Psoas muscle (tissue), 8 donors: ENCODE measurements at regions of chr11 and their contacts with region 1.

Region 1: DNA sequence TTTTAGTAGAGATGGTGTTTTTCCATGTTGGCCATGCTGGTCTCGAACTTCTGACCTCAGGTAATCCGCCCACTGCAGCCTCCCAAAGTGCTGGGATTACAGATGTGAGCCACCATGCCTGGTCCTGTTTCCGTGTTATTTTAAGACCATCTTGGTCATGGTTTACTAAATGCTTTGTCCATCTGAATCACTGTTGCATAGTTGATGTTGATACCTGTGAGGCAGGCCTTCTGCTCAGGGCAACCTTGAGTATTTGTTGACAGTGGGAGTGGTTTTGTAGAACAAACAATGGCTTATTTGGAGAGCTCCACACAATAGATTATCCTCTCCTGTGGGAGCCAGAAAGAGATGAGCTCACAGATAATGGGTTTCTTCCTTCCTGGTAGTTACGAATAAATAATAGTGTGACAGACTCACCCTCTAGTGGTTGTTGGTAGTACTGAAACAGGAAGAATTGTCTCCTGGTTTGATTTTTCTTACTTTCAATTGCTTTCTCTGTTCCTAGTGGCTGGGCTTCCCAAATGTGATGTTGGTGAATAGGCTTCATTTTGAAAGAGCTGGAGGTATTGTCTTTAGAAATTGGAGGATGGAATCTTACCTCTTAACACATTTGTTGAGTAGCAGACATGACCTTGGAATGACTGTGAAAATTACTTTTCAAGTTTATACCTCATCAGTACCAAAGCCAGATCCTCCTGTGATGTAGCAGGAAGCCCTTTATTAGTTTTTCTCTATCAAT is 39.0 kb downstream of the CTNND1 start:
- DNase-seq: no peak
- ATAC-seq: peak; percentile 80 to 89 (median 82)
- H3K4me3 ChIP-seq: no peak overlapping the region
- H3K27ac ChIP-seq: peak overlapping the region; percentile 64
- H3K4me1 ChIP-seq: peaks cover 37% of the 10 kb centered on the region
- H3K27me3 ChIP-seq: no peaks in the 10 kb centered on the region
- CTCF ChIP-seq: peak; percentile 91

Region 2: DNA sequence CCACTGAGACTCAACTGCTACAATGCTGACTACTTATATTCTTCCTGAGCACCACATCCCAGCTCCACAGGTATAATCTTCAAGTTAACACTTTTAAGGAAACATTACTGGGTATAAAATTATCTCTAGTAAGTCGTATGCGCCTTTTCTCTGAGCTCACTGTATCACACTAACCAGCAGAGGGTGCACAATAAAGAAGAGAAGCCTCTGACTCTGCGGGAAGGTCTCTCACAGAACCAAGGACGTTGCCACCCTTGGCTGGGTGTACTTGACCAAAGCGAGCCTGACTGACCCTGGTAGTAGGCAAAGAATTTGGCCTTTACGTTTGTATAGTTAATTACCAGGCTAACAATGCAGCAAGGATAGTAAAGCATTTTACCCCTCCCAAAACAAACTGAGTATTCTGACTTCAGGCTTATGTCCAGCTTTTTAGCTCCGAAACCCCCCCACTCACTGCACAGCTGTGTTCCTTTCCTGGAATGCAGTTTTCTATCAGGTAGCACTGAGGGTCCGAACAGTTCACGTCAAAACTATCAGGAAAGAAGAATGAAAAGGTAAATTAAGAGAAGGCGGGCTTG is 48.8 kb before region 1 on chr11 and contains the start of gene BTBD18:
- intact Hi-C with region 1: loop called (anchors 2 to 10 kb)
- DNase-seq: no peak
- ATAC-seq: peak; percentile 51 to 74 (median 62)
- H3K4me3 ChIP-seq: no peak within 1 kb of the TSS
- H3K27ac ChIP-seq: no peak within 1 kb of the TSS
- H3K4me1 ChIP-seq: no peaks in the 10 kb centered on the region
- H3K27me3 ChIP-seq: no peaks in the 10 kb centered on the region
- CTCF ChIP-seq: peak; percentile 40
- total RNA-seq, gene BTBD18: not detected

Region 3: DNA sequence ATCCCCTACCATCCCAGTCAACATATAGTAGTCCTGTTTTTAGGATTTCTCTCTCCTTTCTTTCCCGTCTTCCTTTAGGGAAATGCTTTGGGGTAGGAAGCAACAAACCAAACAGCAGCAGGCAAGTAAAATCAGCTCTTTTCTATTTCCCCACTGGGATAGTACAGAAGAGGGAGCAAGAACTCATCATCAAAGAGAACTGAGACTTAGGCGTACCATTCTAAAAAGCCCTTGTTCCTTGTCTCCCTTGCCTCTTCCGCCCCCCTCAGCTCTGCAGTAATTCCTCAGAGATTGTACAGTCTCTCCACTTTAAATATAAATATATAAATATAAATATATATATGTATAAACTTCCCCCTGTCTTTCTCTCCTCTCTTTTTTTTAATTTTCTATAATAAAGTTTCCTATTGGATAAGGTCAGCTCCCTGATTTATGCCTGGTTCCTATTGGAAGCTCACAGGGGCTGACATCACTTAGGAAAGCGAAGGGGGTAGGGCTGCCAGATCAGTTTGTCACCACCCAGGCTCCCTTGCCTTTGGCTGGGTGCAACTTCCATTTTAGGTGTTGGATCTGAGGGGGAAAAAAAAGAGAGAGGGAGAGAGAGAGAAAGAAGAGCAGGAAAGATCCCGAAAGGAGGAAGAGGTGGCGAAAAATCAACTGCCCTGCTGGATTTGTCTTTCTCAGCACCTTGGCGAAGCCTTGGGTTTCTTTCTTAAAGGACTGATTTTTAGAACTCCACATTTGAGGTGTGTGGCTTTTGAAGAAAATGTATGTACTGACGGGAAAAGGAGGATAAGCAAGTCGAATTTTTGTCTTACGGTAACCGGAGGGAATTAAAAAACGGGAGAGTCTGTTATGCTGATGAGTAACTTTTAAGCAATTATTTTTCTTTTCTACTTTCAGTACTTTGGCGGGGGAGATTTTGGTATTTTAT is 39.0 kb before region 1 on chr11 and contains the start of gene CTNND1:
- intact Hi-C with region 1: loop called (anchors 1 to 5 kb)
- DNase-seq: peak; percentile 80 to 91
- ATAC-seq: peak; percentile 99 to 100 (median 100)
- H3K4me3 ChIP-seq: peak within 1 kb of the TSS; percentile 83
- H3K27ac ChIP-seq: peak within 1 kb of the TSS; percentile 93
- H3K4me1 ChIP-seq: peaks cover 30% of the 10 kb centered on the region
- H3K27me3 ChIP-seq: no peaks in the 10 kb centered on the region
- CTCF ChIP-seq: no peak
- total RNA-seq, gene CTNND1: 26.1 to 35.2 (median 30.1) TPM

Region 4: GRCh38 chr11:57815476-57815875 is 14.9 kb after region 1 on chr11:
- intact Hi-C with region 1: no loop called
- DNase-seq: no peak
- ATAC-seq: no peak
- H3K4me3 ChIP-seq: no peak overlapping the region
- H3K27ac ChIP-seq: no peak overlapping the region
- H3K4me1 ChIP-seq: no peaks in the 10 kb centered on the region
- H3K27me3 ChIP-seq: no peaks in the 10 kb centered on the region
- CTCF ChIP-seq: no peak

Region 5: DNA sequence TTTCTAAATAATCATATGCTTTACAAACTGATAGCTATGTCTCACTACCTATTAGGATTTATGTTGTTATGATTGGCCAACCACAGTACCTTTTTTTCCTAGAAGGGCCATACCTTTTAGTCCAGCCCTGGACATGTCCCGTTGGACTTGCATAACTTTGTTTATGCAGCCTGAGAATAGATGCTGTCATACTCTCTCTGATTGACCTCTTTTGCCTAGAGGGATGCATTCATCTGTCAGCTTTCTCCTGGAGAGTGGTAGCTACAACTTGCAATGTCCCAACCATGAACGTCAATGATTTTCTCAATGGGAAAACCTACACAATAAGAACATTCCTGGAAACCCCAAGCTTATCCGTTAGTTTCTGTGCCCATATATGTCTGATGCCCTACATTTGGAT is 311.8 kb after region 1 on chr11:
- intact Hi-C with region 1: no loop called
- DNase-seq: no peak
- ATAC-seq: no peak
- H3K4me3 ChIP-seq: no peak overlapping the region
- H3K27ac ChIP-seq: no peak overlapping the region
- H3K4me1 ChIP-seq: no peaks in the 10 kb centered on the region
- H3K27me3 ChIP-seq: no peaks in the 10 kb centered on the region
- CTCF ChIP-seq: no peak

Region 6: DNA sequence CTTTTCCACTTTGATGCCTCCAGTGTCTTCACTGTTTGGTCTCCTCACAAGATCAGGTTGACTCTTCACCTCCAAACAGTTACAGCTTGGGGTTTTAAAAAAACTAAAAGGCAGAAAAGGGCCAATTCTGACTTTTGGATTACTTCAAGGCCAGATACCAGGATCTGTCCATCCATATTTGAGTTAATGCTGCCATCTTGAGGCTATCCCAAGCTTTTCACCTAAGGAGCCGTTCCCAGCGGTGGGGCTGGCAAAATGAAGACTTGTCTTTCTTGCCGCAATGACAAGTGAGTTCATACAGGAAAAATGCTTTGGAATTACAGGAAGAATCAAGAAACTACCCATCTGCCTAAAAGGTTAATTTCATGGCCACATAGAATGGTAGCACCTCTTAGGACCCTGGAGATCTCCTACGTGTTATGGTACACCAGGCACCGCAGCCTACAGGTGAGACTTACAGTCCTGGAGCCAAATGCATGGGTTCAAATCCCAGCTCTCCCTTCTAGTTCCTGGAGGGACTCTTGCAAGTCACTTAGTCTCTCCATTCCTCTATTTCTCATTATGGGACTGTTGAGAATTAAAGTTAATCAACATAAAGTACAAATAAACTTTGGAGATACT is 713.2 kb after region 1 on chr11:
- intact Hi-C with region 1: loop called in 1 of 2 experiments (anchors 5 kb)
- DNase-seq: peak in 1 of 2 donors; percentile 46
- ATAC-seq: peak in 3 of 4 donors; percentile 46 to 82 (median 55)
- H3K4me3 ChIP-seq: no peak overlapping the region
- H3K27ac ChIP-seq: no peak overlapping the region
- H3K4me1 ChIP-seq: no peaks in the 10 kb centered on the region
- H3K27me3 ChIP-seq: no peaks in the 10 kb centered on the region
- CTCF ChIP-seq: peak; percentile 69